Heart left ventricle (tissue), 16 donors: ENCODE measurements at regions of chr11 and their contacts with region 1.

Region 1: GRCh38 chr11:43708776-43709175 is 28.2 kb downstream of the HSD17B12 start:
- DNase-seq: no peak
- ATAC-seq: no peak
- H3K4me3 ChIP-seq: no peak overlapping the region
- H3K27ac ChIP-seq: no peak overlapping the region
- H3K4me1 ChIP-seq: no peaks in the 10 kb centered on the region
- H3K27me3 ChIP-seq: no peaks in the 10 kb centered on the region
- CTCF ChIP-seq: peak; percentile 16 to 62 (median 46)
- POLR2A ChIP-seq: no peak

Region 2: GRCh38 chr11:43664295-43664694 is 44.5 kb before region 1 on chr11:
- intact Hi-C with region 1: no loop called
- DNase-seq: no peak
- ATAC-seq: no peak
- H3K4me3 ChIP-seq: no peak overlapping the region
- H3K27ac ChIP-seq: no peak overlapping the region
- H3K4me1 ChIP-seq: no peaks in the 10 kb centered on the region
- H3K27me3 ChIP-seq: no peaks in the 10 kb centered on the region
- CTCF ChIP-seq: no peak
- POLR2A ChIP-seq: no peak

Region 3: GRCh38 chr11:43779306-43779705 is 70.5 kb after region 1 on chr11:
- intact Hi-C with region 1: loop called in 1 of 10 experiments (anchors 10 kb)
- DNase-seq: no peak
- ATAC-seq: no peak
- H3K4me3 ChIP-seq: no peak overlapping the region
- H3K27ac ChIP-seq: no peak overlapping the region
- H3K4me1 ChIP-seq: peaks cover 0 to 11% (median 0%) of the 10 kb centered on the region in 12 donors
- H3K27me3 ChIP-seq: no peaks in the 10 kb centered on the region
- CTCF ChIP-seq: no peak
- POLR2A ChIP-seq: no peak

Region 4: DNA sequence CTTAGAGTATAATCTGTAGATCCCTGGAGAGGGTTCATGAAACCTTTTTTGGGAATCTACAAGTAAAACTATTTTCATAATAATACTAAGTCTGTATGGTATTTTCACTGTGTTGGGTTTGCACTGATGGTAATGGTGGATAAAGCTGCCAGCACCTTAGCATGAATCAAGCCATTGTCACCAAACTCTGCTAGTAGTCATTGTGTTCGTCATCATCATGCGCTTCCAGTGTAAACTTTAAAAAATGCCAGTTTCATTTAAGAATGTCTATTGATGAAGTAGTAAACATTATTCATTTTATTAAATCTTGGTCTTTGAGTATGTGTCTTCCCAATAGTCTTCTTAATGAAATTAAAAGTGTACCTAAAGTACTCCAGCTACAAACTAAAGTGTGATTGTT is 186.8 kb after region 1 on chr11:
- intact Hi-C with region 1: no loop called
- DNase-seq: no peak
- ATAC-seq: no peak
- H3K4me3 ChIP-seq: no peak overlapping the region
- H3K27ac ChIP-seq: no peak overlapping the region
- H3K4me1 ChIP-seq: no peaks in the 10 kb centered on the region
- H3K27me3 ChIP-seq: no peaks in the 10 kb centered on the region
- CTCF ChIP-seq: no peak
- POLR2A ChIP-seq: no peak